ENCODE measurements at regions of chr1 and their contacts with region 1.

Region 1: DNA sequence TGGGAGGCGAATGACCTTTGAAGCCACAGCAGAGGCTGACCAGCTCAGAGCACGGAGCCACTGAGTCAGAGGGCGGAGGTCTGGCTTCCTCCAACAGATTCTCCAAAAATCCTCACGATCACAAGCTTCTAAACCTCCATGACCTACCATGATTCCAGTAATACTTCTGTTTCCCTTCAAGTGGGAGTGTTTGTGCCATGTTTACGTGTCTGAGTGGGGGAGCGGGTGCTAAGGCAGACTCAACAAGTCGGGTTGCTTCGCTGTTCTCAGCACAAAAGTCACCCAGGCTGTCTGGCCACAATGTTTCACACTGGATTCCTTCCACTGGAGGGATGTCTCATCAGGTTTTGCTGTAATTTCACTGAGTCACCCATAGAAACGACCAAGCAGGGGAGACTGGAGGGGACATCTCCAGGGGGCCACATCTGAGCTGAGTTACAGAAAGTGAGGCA is 86.2 kb downstream of the SLC66A1 start:
- DNase-seq: peak in 1 of 2 donors; percentile 81
- ATAC-seq: peak; percentile 33
- H3K4me3 ChIP-seq: no peak overlapping the region
- H3K27ac ChIP-seq: peak overlapping the region; percentile 8 to 98
- H3K4me1 ChIP-seq: peaks cover 0 to 4% of the 10 kb centered on the region in 2 donors
- H3K27me3 ChIP-seq: no peaks in the 10 kb centered on the region

Region 2: GRCh38 chr1:19430121-19431068 is 32.1 kb after region 1 on chr1:
- intact Hi-C with region 1: loop called in 1 of 2 experiments (anchors 5 kb)
- DNase-seq: peak in 1 of 2 donors; percentile 62
- ATAC-seq: peak; percentile 59
- H3K4me3 ChIP-seq: no peak overlapping the region
- H3K27ac ChIP-seq: peak overlapping the region; percentile 30 to 91
- H3K4me1 ChIP-seq: peaks cover 12 to 25% of the 10 kb centered on the region in 2 donors
- H3K27me3 ChIP-seq: no peaks in the 10 kb centered on the region

Region 3: DNA sequence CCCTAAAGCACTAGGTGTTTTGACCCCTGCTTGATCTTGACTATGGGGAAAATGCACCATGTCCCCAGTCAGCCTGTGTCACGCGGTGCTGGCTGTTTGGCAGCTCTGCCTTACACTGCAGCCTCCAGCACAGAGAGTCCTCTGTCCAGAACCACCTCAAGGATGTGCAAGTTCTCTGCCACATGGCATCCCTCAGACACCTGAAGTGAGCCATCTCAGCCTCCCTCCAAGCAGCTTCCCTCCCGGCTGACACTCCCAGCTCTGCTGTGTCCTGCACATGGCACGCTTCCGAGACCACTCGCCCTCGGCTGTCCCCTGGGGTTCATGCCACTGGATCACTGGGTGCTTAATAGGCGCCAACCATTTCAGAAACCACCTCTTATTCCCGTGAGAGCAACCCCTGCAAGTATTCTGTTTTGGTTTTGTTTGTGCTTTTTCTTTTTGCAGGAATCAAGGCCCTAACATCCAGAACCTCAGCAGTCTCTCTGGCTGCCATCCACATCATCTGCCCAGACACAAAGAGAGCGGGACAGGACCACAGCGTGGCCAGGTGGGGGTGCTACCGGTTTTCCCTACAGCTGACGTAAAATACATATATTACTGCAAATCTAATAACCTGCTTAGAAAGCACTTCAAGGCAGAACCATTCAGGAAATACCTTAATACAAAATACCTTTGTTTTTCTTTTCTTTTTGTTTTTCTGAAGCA is 41.3 kb after region 1 on chr1:
- intact Hi-C with region 1: loop called in 1 of 2 experiments (anchors 5 kb)
- DNase-seq: peak in 1 of 2 donors; percentile 76
- ATAC-seq: no peak
- H3K4me3 ChIP-seq: no peak overlapping the region
- H3K27ac ChIP-seq: peak overlapping the region; percentile 24 to 58
- H3K4me1 ChIP-seq: peaks cover 15 to 19% of the 10 kb centered on the region in 2 donors
- H3K27me3 ChIP-seq: no peaks in the 10 kb centered on the region

Region 4: GRCh38 chr1:19448491-19449439 is 50.4 kb after region 1 on chr1:
- intact Hi-C with region 1: loop called (anchors 5 kb)
- DNase-seq: peak in 1 of 2 donors; percentile 88
- ATAC-seq: peak; percentile 47
- H3K4me3 ChIP-seq: no peak overlapping the region
- H3K27ac ChIP-seq: peak overlapping the region; percentile 62 to 91
- H3K4me1 ChIP-seq: peaks cover 3 to 12% of the 10 kb centered on the region in 2 donors
- H3K27me3 ChIP-seq: no peaks in the 10 kb centered on the region

Region 5: GRCh38 chr1:20248971-20249612 is 850.8 kb after region 1 on chr1:
- intact Hi-C with region 1: no loop called
- DNase-seq: no peak
- ATAC-seq: no peak
- H3K4me3 ChIP-seq: no peak overlapping the region
- H3K27ac ChIP-seq: no peak overlapping the region
- H3K4me1 ChIP-seq: no peaks in the 10 kb centered on the region
- H3K27me3 ChIP-seq: no peaks in the 10 kb centered on the region

Measured in aorta (tissue), 5 donors.